Heart left ventricle (tissue), 16 donors: ENCODE measurements at regions of chr12 and their contacts with region 1.

Region 1: DNA sequence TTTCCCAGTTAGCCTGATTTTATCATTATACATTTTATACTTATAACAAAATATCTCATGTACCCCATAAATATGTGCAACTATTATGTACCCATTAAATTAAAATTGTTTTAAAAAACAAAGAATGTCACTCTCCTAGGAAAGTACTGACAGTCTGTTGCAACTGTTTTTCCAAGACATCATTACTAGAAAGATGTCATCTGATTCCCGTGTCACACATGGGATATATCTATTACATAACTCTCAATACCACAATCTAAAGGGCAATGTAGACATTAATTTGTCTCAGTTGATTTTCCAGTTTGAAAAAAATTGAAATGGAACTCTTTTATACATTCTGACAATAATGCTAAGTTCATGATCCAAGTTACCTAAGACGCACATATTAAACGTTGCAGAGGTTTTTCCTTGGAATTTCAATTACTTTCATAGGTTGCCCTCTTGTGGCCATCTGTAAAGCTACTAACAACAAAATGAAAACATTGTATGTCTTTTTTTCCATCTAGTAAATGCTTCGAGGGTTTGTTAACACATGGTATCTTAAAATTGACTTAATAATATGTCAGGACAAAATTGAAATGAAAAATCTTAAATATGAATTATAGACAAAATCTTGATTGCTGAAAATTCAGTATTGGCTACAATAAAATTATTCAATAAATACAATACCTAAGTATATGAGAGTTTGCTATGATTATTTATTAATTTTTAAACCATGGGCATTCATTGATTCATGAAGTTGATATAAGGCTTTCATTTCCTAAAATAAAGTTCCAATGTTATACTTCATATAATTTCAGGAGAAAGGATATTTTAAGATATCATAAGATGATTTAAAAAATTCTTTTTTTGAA is 131.6 kb downstream of the PPFIA2 start:
- DNase-seq: no peak
- ATAC-seq: no peak
- H3K4me3 ChIP-seq: peak overlapping the region in 1 of 12 donors; percentile 5
- H3K27ac ChIP-seq: no peak overlapping the region
- H3K4me1 ChIP-seq: peaks cover 0 to 4% (median 0%) of the 10 kb centered on the region in 12 donors
- H3K27me3 ChIP-seq: no peaks in the 10 kb centered on the region
- CTCF ChIP-seq: peak; percentile 30 to 70 (median 57)
- POLR2A ChIP-seq: no peak

Region 2: DNA sequence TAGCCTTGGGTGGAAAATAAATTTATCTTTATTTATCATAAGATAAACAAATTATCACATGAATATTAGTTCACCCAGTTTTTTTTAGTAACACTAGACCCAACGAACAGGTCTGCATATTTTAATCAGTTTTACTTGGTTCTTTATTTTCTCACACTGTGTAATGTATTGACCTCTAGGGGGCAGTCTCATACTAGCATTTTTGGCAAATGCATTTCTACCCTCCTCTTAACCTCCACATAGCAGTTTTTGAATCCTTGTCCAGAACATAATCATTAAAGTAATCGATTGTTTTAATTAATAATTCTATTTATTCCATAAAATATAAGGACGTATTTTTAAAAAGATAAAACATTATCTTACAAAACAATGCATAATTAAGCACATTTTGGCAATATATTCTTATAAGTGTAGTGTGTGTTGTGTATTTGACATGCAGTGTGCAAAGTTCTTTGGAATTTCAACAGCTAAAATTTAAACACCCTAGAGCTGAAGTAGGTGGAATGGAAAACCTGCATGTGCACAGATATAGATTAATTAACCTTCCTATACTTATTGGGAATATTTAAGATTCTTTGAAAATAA is 1215.1 kb before region 1 on chr12:
- intact Hi-C with region 1: loop called in 1 of 10 experiments (anchors 5 kb)
- DNase-seq: no peak
- ATAC-seq: peak in 1 of 4 donors; percentile 58
- H3K4me3 ChIP-seq: no peak overlapping the region
- H3K27ac ChIP-seq: no peak overlapping the region
- H3K4me1 ChIP-seq: no peaks in the 10 kb centered on the region
- H3K27me3 ChIP-seq: no peaks in the 10 kb centered on the region
- CTCF ChIP-seq: peak; percentile 57 to 80 (median 74)
- POLR2A ChIP-seq: no peak

Region 3: DNA sequence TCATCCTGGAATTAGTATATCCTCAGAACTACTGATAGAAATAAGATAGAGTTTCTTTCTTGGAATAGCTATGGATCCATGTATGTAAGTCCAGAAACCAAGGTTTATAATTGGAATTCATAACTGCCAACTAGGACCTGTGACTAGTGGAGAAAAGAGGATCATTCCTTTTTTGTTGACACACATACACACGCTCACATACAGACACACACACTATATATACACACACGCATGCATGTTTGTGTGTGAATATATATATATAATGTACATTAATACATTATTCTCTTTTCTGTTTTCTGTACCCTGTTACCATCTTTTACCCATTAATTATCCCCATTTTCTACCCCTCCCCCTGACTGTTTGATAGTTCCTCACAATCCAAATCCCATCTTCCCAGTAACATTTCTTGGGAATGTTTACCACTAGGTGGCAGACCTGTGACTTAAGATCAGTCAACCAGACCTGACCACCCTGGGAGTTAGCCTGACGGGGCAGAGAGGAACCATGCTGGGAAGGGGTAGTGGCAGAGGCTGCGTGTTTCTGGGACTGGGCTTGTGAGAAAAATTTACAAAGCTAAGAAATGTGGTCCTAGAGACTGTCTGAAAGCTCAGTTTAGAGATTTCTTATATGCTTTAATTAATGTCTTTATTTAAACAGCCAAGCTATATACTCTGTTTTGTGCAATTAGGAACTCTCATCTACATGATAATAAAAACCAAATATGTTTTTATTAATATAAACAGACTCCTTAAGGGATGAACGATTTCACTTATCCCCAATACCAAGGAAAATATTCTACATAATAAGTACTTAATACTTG is 176.4 kb before region 1 on chr12:
- intact Hi-C with region 1: loop called (anchors 1 to 5 kb)
- DNase-seq: peak in 3 of 5 donors; percentile 18 to 28 (median 21)
- ATAC-seq: peak; percentile 42 to 72 (median 66)
- H3K4me3 ChIP-seq: no peak overlapping the region
- H3K27ac ChIP-seq: no peak overlapping the region
- H3K4me1 ChIP-seq: no peaks in the 10 kb centered on the region
- H3K27me3 ChIP-seq: no peaks in the 10 kb centered on the region
- CTCF ChIP-seq: peak; percentile 36 to 66 (median 50)
- POLR2A ChIP-seq: no peak

Region 4: DNA sequence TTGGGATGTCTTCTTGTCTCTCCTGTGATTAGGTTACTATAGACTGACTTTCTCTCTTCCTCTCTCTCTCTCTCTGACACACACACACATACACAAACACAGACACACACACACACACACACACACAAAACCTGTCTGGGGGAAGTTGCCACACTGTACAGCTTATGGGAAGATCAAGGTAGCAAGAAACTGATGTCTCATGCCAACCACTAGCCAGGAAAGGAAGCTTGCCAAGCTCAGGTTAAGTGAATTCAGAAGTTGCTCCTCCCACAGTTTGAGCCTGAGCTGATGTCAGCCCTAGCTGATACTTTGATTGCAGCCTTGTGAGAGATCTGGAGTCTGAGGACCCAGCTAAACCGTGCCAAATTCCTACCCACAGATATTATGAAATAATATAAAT is 64.4 kb after region 1 on chr12:
- intact Hi-C with region 1: no loop called
- DNase-seq: no peak
- ATAC-seq: no peak
- H3K4me3 ChIP-seq: no peak overlapping the region
- H3K27ac ChIP-seq: no peak overlapping the region
- H3K4me1 ChIP-seq: no peaks in the 10 kb centered on the region
- H3K27me3 ChIP-seq: no peaks in the 10 kb centered on the region
- CTCF ChIP-seq: no peak
- POLR2A ChIP-seq: no peak